ENCODE measurements at regions of chr4 and their contacts with region 1.

Region 1: DNA sequence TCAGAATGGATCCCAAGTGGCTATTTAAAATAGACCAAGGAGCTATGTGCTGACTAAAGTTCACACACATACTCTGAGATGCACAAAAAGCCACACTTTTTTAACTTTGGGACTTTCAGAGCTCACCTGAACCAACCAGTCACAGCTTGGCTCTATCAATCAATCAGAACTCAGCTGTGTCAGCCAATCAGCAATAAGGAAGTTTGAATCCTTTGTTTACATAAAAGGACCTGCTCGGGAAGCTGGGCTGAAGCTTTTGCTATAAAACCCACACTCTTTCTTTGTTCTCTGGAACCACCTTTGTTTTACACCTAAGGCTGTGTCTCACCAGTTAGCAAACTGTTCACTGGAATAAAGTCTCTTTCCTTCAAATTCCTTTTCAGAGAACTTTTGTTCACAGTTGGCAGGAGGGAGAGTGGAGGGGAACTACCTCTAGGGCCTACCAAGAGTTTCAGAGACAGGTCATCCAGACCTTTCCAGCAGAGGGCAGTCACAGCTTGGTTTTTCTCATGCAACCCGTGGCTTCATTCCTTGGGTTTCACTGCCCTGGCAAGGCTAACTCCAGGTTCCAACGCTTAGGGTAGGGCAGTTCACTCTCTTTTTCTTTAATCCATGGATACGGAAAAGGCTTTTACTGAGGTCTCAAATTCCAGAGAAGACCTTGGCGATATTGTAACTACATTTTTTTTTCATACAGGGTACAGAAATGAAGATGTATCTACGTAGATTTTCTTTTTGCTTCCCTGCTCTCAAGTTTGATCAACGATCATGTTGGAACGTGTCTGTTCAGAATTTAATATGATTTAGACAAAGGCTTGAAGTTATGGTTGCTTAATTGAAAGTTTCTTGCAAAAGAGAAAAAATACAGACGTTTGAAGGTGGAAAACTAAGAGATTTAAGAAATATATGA is 80.7 kb downstream of the GPRIN3 start:
- DNase-seq: no peak
- ATAC-seq: peak; percentile 92

Region 2: GRCh38 chr4:89134775-89135319 is 92.1 kb before region 1 on chr4:
- intact Hi-C with region 1: no loop called
- DNase-seq: no peak
- ATAC-seq: peak; percentile 57

Region 3: DNA sequence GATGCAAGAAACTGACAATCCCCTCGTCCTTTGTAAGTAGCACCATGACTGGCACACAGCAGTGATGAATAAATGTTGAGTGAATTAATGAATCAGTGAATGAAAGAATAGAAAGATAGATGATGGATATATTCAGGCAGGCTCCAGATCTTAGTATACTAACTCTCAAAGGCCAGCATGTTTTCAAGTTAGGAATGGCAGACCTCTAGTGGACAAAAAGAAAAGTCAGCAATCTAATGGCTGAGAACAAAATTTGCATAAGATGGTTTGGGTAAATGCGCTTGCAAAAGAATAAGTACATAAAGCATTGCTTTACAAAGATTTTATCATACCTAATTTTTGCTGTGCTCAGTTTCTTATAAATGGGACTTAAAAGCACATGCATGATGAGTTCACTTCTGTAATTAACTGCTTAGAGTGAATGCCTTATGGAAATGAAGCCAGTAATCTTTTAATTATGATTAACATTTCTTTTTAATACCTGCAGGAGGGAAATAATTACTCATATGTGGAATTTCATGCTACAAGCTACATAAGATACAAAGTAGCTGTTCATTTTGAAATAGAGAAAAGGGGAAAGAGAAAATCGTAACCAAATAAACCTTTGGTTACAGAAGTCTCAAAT is 207.6 kb after region 1 on chr4:
- intact Hi-C with region 1: loop called (anchors 1 kb)
- DNase-seq: no peak
- ATAC-seq: peak; percentile 37

Region 4: DNA sequence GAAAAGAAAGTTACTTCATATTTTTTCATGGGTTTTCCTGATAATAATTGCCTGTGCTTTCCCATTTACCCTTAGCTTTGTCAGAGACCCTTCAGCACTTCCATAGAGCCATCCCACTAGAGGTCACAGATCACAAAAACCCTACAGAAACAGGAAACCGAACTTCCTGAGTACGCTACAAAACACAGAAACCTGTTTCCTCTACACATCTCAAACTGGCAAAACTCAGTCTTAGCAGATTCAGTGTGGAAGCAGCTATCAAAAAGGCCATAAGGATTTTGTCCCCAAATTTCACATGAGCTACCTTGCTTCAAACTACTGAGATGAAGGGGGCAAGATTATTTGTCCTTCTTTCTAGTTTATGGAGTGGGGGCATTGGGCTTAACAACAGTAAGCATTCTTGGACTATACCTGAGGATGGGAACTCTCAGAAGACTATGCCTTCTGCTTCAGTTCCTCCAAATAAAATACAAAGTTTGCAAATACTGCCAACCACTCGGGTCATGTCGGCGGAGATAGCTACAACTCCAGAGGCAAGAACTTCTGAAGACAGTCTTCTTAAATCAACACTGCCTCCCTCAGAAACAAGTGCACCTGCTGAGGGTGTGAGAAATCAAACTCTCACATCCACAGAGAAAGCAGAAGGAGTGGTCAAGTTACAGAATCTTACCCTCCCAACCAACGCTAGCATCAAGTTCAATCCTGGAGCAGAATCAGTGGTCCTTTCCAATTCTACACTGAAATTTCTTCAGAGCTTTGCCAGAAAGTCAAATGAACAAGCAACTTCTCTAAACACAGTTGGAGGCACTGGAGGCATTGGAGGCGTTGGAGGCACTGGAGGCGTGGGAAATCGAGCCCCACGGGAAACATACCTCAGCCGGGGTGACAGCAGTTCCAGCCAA is 668.0 kb after region 1 on chr4 and contains the start of gene MMRN1:
- intact Hi-C with region 1: loop called (anchors 10 kb)
- DNase-seq: no peak
- ATAC-seq: no peak
- total RNA-seq, gene MMRN1: 3.7 TPM